Psoas muscle (tissue), 8 donors: ENCODE measurements at regions of chr20 and their contacts with region 1.

Region 1: DNA sequence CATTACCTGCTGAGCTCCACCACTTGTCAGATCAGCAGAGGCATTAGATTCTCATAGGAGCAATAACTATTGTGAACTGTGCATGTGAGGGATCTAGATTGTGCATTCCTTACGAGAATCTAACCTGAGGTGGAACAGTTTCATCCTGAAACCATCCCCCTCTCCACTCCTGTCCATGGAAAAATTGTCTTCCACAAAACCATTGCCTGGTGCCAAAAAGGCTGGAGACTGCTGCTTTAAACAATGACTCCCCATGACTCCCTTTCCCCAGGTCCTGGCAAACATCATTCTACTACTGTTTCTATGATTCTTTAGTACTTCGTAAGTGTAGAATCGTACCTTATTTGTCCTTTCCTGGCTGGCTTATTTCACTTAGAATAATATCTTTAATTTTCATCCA is 9.7 kb upstream of the DYNLRB1 start:
- DNase-seq: no peak
- ATAC-seq: no peak
- H3K4me3 ChIP-seq: no peak overlapping the region
- H3K27ac ChIP-seq: no peak overlapping the region
- H3K4me1 ChIP-seq: no peaks in the 10 kb centered on the region
- H3K27me3 ChIP-seq: no peaks in the 10 kb centered on the region
- CTCF ChIP-seq: no peak

Region 2: DNA sequence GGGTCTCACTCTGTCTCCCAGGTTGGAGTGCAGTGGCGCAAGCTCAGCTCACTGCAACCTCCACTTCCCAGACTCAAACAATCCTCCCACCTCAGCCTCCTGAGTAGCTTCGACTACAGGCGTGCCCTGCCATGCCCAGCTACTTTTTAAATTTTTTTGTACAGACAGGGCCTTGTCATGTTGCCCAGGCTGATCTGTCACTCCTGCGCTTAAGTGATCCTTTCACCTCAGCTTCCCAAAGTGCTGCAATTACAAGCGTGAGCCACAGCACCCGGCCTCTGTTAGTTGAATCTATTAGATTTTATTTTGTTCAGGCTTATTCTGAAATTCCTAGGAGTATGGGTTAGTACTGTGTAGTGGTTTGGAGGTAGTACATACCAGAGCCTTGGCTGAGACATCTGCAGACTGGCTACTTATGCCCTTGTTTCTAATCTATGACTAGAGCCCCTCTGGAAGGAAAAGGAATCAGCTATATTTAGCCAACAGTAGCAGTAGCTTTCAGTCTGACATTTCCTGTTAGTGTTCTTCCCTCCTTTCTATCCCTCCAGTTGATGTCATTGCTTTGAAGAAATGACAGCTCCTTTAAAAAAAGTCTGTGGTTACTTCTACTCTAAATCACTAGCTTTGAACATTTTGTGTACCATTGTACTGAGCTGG is 69.0 kb before region 1 on chr20:
- intact Hi-C with region 1: loop called in 1 of 2 experiments (anchors 10 kb)
- DNase-seq: no peak
- ATAC-seq: peak in 3 of 4 donors; percentile 24 to 40 (median 33)
- H3K4me3 ChIP-seq: no peak overlapping the region
- H3K27ac ChIP-seq: no peak overlapping the region
- H3K4me1 ChIP-seq: no peaks in the 10 kb centered on the region
- H3K27me3 ChIP-seq: no peaks in the 10 kb centered on the region
- CTCF ChIP-seq: no peak

Region 3: DNA sequence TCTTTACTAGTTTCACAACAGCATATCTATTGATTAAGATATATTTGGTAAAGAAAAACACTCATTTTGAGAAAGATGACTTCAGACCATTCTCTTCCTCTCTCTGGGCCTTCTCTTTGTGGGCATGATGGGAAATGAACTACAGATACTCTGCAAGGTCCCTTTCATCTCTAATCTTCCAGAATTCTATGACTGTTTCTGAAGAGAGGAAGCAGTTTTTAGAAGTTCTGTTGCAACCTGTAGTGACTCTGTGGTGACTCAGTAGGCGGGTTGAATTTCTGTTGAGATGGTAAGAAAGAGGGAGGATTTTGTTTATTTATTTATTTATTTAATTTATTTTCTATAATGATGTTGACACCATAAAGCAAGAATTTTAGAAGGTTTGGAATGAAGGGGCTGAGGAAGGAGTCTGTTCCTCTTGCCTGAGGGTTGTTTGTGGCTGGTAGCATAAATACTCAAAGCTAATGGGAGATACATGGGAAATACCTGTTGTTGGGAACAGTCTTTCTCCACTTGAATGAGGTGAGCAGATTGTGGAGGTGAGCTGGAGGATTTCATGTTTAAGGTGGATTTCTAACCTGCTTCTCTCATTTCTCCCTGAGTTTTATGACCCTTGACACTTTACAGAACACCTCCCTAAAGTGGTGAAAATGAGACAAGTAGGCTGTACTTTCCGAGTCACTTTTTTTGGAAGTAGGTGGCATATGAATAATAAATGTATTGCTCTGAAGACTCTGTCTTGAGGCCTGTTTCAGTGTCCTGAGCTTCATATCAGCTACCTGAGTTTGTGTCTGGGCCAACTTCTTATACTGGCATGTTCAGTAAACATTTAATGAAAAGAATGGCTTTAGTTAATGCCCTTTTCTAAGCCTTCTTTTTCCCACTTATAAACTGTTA is 384.9 kb after region 1 on chr20:
- intact Hi-C with region 1: no loop called
- DNase-seq: no peak
- ATAC-seq: peak; percentile 22 to 57 (median 39)
- H3K4me3 ChIP-seq: no peak overlapping the region
- H3K27ac ChIP-seq: peak overlapping the region; percentile 69
- H3K4me1 ChIP-seq: peaks cover 56% of the 10 kb centered on the region
- H3K27me3 ChIP-seq: no peaks in the 10 kb centered on the region
- CTCF ChIP-seq: no peak